AG04450 (cell line): ENCODE measurements at regions of chr12 and their contacts with region 1.

Region 1: DNA sequence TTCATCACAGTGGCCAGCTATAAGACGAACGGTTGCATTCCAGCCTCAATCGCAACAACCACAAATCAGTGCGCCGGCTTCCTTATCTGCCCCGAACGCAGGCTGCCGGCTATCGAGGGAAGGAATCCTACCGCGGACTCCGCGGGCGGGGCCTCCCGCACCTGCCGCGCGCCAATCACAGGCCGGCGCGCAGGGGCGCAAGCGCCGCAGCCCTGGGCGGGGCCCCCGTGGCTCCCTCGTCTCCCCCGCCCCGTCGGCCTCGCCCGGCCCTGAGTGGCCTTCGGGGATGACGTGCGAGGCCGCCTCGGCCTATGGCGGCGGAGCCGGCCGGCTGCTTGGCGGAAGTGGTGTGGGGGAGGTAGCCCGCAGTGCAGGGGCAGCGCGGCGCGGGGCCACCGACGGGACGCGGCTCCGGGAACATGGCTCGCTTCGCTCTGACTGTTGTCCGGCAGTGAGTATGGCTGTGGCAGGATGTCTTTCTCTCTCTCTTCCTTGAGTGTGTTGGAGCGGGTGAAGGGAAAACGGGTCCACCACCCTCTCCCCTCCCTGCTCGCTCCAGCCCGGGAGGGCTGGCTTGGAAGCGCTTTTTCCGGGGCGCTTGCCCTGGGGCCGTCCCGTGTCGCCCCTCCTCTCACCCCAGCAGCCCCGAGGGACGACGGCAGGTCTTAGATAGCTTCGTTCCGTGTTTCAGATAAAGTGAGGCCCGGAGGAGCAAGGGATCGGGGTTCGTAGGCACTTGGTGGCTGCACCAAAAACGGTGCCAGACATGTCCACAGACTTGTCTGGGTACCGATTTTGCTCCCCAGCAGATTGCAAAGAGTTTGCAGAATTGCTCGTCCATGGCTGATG is at the start of gene TIGAR:
- DNase-seq: peak; percentile 80
- H3K4me3 ChIP-seq: peak within 1 kb of the TSS; percentile 90
- H3K27ac ChIP-seq: peak within 1 kb of the TSS; percentile 88
- H3K27me3 ChIP-seq: no peaks in the 10 kb centered on the region
- CTCF ChIP-seq: no peak
- polyA plus RNA-seq, gene TIGAR: 24.5 and 28.8 TPM in 2 replicates

Region 2: DNA sequence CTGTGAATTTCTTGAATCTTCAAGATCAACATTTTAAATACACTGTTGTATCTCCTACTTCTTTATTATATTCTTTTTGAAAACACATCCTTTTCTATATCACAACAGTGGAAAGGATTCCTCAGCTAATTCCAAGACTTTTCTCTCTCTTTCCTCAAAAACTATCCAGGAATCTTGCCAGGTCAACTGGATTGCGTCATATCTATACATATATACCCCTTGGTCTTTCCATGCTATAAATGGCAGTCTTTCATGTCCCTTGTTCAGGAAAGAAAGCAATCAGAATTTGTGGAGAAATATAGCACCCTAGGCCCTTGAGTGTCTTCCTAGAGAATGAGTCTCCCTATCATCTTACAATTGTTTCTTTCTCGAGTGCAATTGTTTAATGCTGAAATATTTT is 871.7 kb after region 1 on chr12:
- CTCF ChIA-PET with region 1: no interaction called
- POLR2A ChIA-PET with region 1: interaction called, 11 read pairs
- DNase-seq: no peak
- H3K4me3 ChIP-seq: no peak overlapping the region
- H3K27ac ChIP-seq: no peak overlapping the region
- H3K27me3 ChIP-seq: no peaks in the 10 kb centered on the region
- CTCF ChIP-seq: no peak